Gastrocnemius medialis (tissue), 4 donors: ENCODE measurements at regions of chr6 and their contacts with region 1.

Region 1: GRCh38 chr6:158231551-158232315 is 63.6 kb downstream of the GTF2H5 start:
- DNase-seq: peak; percentile 41 to 65
- ATAC-seq: peak; percentile 86 to 89
- H3K4me3 ChIP-seq: peak overlapping the region; percentile 73 to 86 (median 82)
- H3K27ac ChIP-seq: peak overlapping the region; percentile 82 to 93 (median 90)
- H3K4me1 ChIP-seq: peaks cover 15 to 20% of the 10 kb centered on the region in 2 donors
- H3K27me3 ChIP-seq: no peaks in the 10 kb centered on the region
- CTCF ChIP-seq: no peak
- POLR2A ChIP-seq: peak; percentile 79 to 84

Region 2: DNA sequence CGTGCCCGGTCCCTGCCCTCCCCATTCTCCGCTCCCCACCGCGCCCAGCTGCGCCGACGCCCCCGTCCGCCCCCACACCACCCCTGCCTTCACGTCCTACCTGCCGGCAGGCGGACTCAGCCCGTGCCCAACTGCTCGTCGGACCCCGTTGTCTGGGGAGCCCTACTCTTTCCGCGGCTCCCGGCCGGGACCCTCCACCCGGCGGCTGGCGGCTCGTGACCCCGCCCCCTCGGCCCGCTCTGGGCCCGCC is 63.8 kb before region 1 on chr6 and contains the start of gene SERAC1:
- in situ Hi-C with region 1: no loop called
- intact Hi-C with region 1: loop called (anchors 1 kb)
- DNase-seq: no peak
- ATAC-seq: peak; percentile 82 to 83
- H3K4me3 ChIP-seq: peak within 1 kb of the TSS; percentile 73 to 94 (median 84)
- H3K27ac ChIP-seq: peak within 1 kb of the TSS; percentile 93 to 98 (median 96)
- H3K4me1 ChIP-seq: peaks cover 25 to 32% of the 10 kb centered on the region in 2 donors
- H3K27me3 ChIP-seq: no peaks in the 10 kb centered on the region
- CTCF ChIP-seq: peak in 1 of 5 experiments; percentile 6
- POLR2A ChIP-seq: no peak
- total RNA-seq, gene SERAC1: 8.1 to 15.5 (median 11.5) TPM

Region 3: GRCh38 chr6:158417760-158418098 is 186.0 kb after region 1 on chr6:
- in situ Hi-C with region 1: no loop called
- intact Hi-C with region 1: no loop called
- DNase-seq: no peak
- ATAC-seq: no peak
- H3K4me3 ChIP-seq: no peak overlapping the region
- H3K27ac ChIP-seq: no peak overlapping the region
- H3K4me1 ChIP-seq: no peaks in the 10 kb centered on the region
- H3K27me3 ChIP-seq: no peaks in the 10 kb centered on the region
- CTCF ChIP-seq: no peak
- POLR2A ChIP-seq: no peak

Region 4: DNA sequence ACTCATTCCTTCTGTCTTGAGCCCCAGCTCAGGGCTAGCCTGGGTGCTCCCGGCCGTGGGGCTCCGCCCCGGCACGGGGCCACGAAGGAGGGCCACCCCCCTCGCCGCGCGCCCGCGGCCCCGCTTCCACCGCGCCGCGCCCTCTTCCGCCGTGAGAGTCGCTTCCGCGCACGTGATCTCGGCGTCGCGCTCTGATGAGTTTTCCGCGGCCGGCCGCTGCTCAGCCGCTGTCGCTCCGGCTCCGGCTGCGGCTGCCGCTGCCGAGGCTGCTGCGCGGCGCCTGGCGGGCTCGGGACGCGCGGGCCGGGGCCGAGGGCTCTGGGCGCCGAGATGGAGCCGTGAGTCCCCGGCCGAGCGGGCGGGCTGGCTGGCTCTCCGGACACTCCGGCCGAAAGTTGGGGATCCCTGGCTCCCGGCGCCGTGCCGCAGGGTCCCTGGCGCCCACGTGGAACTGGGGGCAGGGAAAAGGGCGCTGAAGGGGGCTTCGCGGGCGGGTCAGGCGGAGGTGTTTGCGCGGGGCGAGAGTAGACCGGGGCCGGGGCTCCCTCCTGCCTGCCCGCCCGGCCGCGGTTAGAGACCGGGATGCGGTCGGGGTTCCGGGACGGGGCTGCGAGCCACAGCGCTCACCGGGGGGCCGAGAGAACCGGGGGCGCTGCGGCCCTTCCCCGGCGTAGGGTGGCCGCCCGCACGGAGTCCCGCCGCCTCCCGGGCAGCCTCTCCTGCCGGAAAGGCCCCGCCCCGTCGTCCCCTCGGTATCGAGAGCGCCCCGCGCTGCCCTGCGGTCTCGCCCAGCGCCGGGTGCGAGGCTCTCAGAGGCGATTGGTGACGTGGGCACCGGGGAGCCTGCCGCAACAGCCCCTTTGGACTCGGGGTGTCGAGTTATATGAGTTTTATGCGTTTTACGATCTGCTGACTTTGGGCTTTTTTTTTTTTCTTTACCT is 328.4 kb after region 1 on chr6 and contains the start of gene TMEM181:
- in situ Hi-C with region 1: no loop called
- intact Hi-C with region 1: loop called (anchors 1 kb)
- DNase-seq: peak; percentile 63 to 71
- ATAC-seq: peak; percentile 90 to 95
- H3K4me3 ChIP-seq: peak within 1 kb of the TSS; percentile 80 to 92 (median 86)
- H3K27ac ChIP-seq: peak within 1 kb of the TSS; percentile 84 to 90 (median 90)
- H3K4me1 ChIP-seq: peaks cover 11 to 18% of the 10 kb centered on the region in 2 donors
- H3K27me3 ChIP-seq: no peaks in the 10 kb centered on the region
- CTCF ChIP-seq: peak in 2 of 5 experiments; percentile 11 to 12
- POLR2A ChIP-seq: peak; percentile 74 to 83
- total RNA-seq, gene TMEM181: 12.1 to 17.9 (median 12.9) TPM

Region 5: DNA sequence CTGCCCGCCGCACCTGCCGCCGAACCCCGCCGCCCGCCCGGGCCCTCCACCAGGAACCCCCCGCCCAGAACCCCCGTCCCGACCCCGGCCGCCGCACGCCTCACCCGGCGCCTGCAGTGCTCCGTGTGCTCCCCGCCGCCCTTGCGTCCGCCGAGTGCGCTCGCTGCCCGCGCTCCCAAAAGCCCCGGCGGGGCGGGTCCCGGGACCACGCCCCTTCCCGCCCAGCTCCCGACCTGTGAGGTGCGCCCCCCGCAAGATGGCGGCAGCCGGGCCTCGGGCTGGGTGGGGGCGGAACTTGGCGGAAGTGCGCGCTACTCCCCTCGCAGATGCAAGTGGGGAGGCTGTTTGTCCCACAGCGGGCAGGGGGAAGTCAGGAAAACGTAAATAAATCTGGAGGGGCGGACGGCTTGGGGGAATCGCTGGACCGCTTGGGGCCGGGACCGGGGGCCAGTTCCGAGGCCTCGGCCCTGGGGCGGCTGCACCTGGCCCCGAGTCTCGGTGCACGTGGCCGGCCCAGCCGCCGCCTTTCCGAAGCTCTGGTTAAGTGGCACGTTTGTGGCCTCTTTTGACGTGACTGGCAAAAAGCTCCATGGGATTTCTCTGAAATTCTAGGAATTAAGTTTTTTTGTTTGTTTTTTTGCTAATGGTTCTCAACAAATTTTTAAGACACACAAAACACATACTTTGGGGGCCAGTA is 587.6 kb after region 1 on chr6 and contains the start of gene EZR:
- in situ Hi-C with region 1: no loop called
- intact Hi-C with region 1: loop called (anchors 10 kb)
- DNase-seq: peak; percentile 34 to 70
- ATAC-seq: peak; percentile 44 to 53
- H3K4me3 ChIP-seq: peak within 1 kb of the TSS; percentile 81 to 88 (median 84)
- H3K27ac ChIP-seq: peak within 1 kb of the TSS; percentile 90 to 93 (median 92)
- H3K4me1 ChIP-seq: peaks cover 10 to 17% of the 10 kb centered on the region in 2 donors
- H3K27me3 ChIP-seq: no peaks in the 10 kb centered on the region
- CTCF ChIP-seq: no peak
- POLR2A ChIP-seq: peak; percentile 57 to 74
- total RNA-seq, gene EZR: 18.1 to 54.1 (median 33.6) TPM